Aorta (tissue), 5 donors: ENCODE measurements at regions of chr15 and their contacts with region 1.

Region 1: GRCh38 chr15:29411299-29411698 is 141.7 kb upstream of the NSMCE3 start:
- DNase-seq: no peak
- ATAC-seq: no peak
- H3K4me3 ChIP-seq: no peak overlapping the region
- H3K27ac ChIP-seq: no peak overlapping the region
- H3K4me1 ChIP-seq: no peaks in the 10 kb centered on the region
- H3K27me3 ChIP-seq: no peaks in the 10 kb centered on the region

Region 2: DNA sequence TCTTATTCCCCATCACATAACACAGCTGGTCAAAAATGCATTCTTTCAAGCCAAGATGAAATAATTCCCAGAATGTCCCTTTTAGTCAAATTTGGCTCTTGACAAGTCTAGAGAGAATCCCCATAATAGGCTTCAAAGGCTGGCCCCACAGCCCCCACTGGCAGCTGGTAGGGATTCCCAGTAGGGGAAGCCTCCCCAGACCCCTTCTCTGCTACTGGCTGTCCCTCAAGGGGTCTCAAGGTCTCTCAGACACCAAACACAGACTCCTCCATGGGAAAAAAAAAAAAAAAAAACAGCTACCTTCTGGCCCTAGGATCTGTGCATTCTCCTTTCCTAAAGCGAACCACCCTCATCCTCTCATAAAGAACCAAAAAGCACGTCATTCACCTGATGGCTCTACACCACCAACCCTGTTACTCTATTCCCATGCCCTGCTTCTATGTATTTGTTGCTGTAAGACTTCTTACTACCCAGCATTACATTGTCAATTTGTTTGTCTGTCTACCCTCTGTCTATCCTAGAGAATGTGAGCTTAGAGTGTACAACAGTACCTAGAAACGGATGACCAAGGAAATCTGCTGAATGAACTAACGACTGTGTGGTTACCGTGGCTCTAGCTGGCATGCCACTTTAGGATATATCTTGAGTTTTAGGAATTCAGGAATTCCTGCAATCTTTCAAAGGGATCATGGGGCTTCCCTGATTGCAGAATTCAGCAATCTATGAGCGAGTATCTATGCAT is 22.4 kb after region 1 on chr15:
- intact Hi-C with region 1: loop called in 1 of 2 experiments (anchors 1 kb)
- DNase-seq: no peak
- ATAC-seq: no peak
- H3K4me3 ChIP-seq: no peak overlapping the region
- H3K27ac ChIP-seq: no peak overlapping the region
- H3K4me1 ChIP-seq: no peaks in the 10 kb centered on the region
- H3K27me3 ChIP-seq: no peaks in the 10 kb centered on the region